IMR-90 (cell line): ENCODE measurements at regions of chr1 and their contacts with region 1.

Region 1: GRCh38 chr1:247316590-247317197 is 15.0 kb downstream of the ZNF496 start:
- DNase-seq: no peak
- ATAC-seq: no peak
- H3K4me3 ChIP-seq: no peak overlapping the region
- H3K27ac ChIP-seq: no peak overlapping the region
- H3K4me1 ChIP-seq: no peaks in the 10 kb centered on the region
- H3K27me3 ChIP-seq: no peaks in the 10 kb centered on the region
- CTCF ChIP-seq: no peak
- POLR2A ChIP-seq: no peak
- RAD21 ChIP-seq: no peak

Region 2: GRCh38 chr1:246907472-246907871 is 409.2 kb before region 1 on chr1:
- CTCF ChIA-PET with region 1: no interaction called
- POLR2A ChIA-PET with region 1: no interaction called
- dilution Hi-C with region 1: no loop called
- in situ Hi-C with region 1: loop called (anchors 10 kb)
- intact Hi-C with region 1: loop called (anchors 5 kb)
- DNase-seq: peak; percentile 72
- ATAC-seq: peak; percentile 74
- H3K4me3 ChIP-seq: no peak overlapping the region
- H3K27ac ChIP-seq: no peak overlapping the region
- H3K4me1 ChIP-seq: no peaks in the 10 kb centered on the region
- H3K27me3 ChIP-seq: no peaks in the 10 kb centered on the region
- CTCF ChIP-seq: peak; percentile 44
- POLR2A ChIP-seq: no peak
- RAD21 ChIP-seq: peak; percentile 53

Region 3: DNA sequence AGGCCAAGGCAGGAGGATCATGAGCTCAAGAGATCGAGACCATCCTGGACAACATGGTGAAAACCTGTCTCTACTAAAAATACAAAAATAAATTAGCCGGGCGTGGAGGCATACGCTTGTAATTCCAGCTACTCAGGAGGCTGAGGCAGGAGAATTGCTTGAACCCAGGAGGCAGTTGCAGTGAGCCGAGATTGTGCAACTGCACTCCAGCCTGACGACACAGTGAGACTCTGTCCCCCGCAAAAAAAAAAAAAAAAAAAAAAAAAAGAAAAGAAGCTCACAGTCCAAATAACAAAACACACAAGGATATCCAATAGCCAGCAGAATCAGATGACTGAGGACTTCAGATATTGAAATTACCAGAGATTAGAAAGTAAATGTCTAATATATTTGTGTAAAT is 396.8 kb before region 1 on chr1:
- CTCF ChIA-PET with region 1: no interaction called
- POLR2A ChIA-PET with region 1: no interaction called
- dilution Hi-C with region 1: no loop called
- in situ Hi-C with region 1: loop called (anchors 10 kb)
- intact Hi-C with region 1: no loop called
- DNase-seq: no peak
- ATAC-seq: no peak
- H3K4me3 ChIP-seq: no peak overlapping the region
- H3K27ac ChIP-seq: no peak overlapping the region
- H3K4me1 ChIP-seq: peaks cover 6% of the 10 kb centered on the region; the same call in 1 of the 2 replicates
- H3K27me3 ChIP-seq: no peaks in the 10 kb centered on the region
- CTCF ChIP-seq: no peak
- POLR2A ChIP-seq: no peak
- RAD21 ChIP-seq: no peak

Region 4: GRCh38 chr1:247210376-247211117 is 106.1 kb before region 1 on chr1:
- CTCF ChIA-PET with region 1: no interaction called
- POLR2A ChIA-PET with region 1: no interaction called
- dilution Hi-C with region 1: no loop called
- in situ Hi-C with region 1: no loop called
- intact Hi-C with region 1: loop called (anchors 5 kb)
- DNase-seq: peak; percentile 85
- ATAC-seq: peak; percentile 100
- H3K4me3 ChIP-seq: peak overlapping the region; percentile 79
- H3K27ac ChIP-seq: peak overlapping the region; percentile 51
- H3K4me1 ChIP-seq: peaks cover 3% of the 10 kb centered on the region
- H3K27me3 ChIP-seq: no peaks in the 10 kb centered on the region
- CTCF ChIP-seq: no peak
- POLR2A ChIP-seq: peak; percentile 83
- RAD21 ChIP-seq: no peak